ENCODE measurements at regions of chr14 and their contacts with region 1.

Region 1: GRCh38 chr14:22271838-22272799 is 316.9 kb downstream of the DAD1 start:
- DNase-seq: no peak
- H3K4me3 ChIP-seq: no peak overlapping the region
- CTCF ChIP-seq: no peak

Region 2: DNA sequence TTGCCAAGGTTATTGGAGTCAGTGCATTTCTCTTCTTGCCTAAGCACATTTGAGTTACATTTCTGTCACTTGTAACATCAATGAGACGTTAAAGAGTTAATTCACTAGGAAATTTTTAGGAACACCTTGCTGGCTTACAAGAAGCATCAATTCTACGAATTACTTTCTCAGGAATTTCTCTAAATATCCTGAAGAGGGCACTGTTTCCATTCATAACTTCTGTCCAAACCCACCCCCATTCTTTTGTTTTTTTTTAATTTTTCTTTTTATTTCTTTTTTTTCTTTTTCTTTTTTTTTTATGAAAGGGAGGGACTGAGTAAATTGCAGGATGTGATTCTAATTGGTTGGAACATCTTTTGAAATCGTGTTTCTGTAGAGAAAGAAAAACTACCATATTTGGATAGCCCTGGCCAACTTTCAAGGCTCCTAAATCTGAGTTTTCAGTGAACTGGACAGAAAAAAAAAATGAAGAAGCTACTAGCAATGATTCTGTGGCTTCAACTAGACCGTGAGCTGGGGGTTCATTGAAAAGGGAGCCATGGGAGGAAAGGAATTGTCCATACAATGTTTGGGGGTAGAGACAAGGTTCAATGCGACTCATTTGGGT is 31.6 kb after region 1 on chr14:
- CTCF ChIA-PET with region 1: interaction called, 12 read pairs
- POLR2A ChIA-PET with region 1: no interaction called
- DNase-seq: no peak
- H3K4me3 ChIP-seq: no peak overlapping the region
- CTCF ChIP-seq: no peak

Region 3: DNA sequence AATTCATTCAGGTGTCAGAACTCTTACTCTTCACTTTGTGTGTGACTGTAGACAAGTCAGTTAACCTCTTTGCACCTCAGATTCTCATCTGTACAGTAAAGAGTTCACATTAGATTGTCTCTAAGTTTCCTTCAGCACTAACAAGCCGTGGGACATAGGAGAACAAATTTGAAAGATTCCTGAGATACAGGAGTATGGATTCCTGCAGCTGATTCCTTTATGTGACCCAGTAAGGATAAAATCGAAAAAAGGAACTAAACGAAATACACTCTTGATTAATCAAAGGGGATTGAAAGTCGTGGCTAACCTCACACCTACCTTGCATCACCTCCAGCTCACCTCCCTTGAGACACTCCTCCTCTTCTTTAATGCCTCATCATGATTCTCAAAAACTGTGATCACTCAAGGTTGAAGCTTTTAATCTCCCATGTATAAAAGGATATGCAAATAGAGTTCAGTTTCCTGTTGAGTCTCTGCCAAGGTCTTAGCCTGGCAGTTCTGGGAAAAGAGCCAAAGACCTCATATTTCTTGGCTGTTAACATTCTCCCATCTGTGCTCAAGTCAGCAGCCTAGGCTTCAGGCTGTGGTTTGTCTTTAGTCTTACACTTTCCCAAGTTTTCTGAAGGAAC is 160.3 kb after region 1 on chr14:
- CTCF ChIA-PET with region 1: no interaction called
- POLR2A ChIA-PET with region 1: no interaction called
- DNase-seq: peak; percentile 81
- H3K4me3 ChIP-seq: no peak overlapping the region
- CTCF ChIP-seq: no peak